ENCODE measurements at regions of chr2 and their contacts with region 1.

Region 1: DNA sequence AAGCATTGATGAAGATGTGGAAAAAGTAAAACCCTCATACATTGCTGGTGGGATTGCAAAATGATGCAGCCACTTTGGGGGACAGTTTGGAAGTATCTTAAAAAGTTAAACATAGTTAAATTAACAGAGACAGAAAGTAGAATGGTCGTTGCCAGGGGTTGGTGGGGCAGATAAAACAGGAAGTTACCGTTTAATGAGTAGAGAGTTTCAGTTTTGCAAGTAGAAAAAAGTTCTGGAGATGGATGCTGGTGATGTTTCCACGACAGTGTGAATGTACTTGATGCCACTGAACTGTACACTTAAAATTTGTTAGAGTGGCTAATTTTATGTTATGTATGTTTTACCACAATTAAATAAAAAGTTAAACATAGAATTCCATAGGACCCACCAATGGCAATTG is 44.5 kb upstream of the EGR4 start:
- DNase-seq: no peak
- ATAC-seq: no peak
- H3K4me3 ChIP-seq: no peak overlapping the region
- H3K27ac ChIP-seq: no peak overlapping the region
- H3K4me1 ChIP-seq: no peaks in the 10 kb centered on the region
- H3K27me3 ChIP-seq: peaks cover 12% of the 10 kb centered on the region; the same call in 1 of the 2 replicates
- CTCF ChIP-seq: no peak

Region 2: GRCh38 chr2:72638600-72639194 is 699.1 kb before region 1 on chr2:
- CTCF ChIA-PET with region 1: no interaction called
- POLR2A ChIA-PET with region 1: no interaction called
- in situ Hi-C with region 1: no loop called
- intact Hi-C with region 1: no loop called
- DNase-seq: no peak
- ATAC-seq: no peak
- H3K4me3 ChIP-seq: no peak overlapping the region
- H3K27ac ChIP-seq: no peak overlapping the region
- H3K4me1 ChIP-seq: no peaks in the 10 kb centered on the region
- H3K27me3 ChIP-seq: no peaks in the 10 kb centered on the region
- CTCF ChIP-seq: no peak

Region 3: DNA sequence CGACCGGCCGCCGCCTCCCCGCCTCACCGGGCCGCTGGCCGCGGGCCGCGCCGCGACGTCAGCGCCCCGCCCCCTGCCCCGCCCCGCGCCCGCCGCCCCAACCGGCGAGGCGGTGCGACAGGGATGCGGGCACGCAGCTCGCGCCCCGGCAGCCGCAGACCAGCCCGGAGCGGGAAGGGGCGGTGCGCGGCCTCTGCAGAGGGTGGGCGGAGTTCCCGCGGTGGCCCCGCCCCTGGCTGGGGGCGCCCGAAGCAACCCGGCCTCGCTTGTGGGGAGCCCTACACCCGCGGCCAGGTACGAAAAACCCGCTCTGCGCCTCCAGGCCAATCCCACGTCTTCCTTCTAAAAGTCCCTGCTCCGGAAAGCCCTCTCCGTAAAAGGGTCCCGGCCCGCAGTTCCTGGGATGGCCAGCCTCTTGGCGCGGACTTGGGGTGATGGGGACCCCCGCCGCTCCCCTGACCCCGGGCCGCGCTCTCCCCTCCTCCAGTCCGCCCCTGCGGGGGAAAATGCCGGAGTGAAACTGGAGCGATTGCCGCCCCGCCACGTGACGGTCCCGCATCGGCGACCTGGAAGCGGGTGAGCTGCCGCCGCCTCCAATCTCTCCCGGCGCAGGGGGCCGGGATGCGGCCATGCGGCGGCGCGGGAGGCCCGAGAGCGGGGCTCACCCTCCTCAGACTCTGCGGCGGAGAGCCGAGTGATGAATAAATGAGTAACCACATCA is 224.8 kb before region 1 on chr2 and contains the start of gene RAB11FIP5:
- CTCF ChIA-PET with region 1: no interaction called
- POLR2A ChIA-PET with region 1: interaction called, 10 read pairs
- in situ Hi-C with region 1: no loop called
- intact Hi-C with region 1: no loop called
- DNase-seq: no peak
- ATAC-seq: peak; percentile 93
- H3K4me3 ChIP-seq: peak within 1 kb of the TSS; percentile 71 to 80
- H3K27ac ChIP-seq: peak within 1 kb of the TSS; percentile 83
- H3K4me1 ChIP-seq: peaks cover 16% of the 10 kb centered on the region
- H3K27me3 ChIP-seq: no peaks in the 10 kb centered on the region
- CTCF ChIP-seq: no peak
- total RNA-seq, gene RAB11FIP5: 27.3 TPM

Region 4: GRCh38 chr2:73561422-73561821 is 223.6 kb after region 1 on chr2:
- CTCF ChIA-PET with region 1: no interaction called
- POLR2A ChIA-PET with region 1: interaction called, 12 read pairs
- in situ Hi-C with region 1: no loop called
- intact Hi-C with region 1: no loop called
- DNase-seq: no peak
- ATAC-seq: no peak
- H3K4me3 ChIP-seq: no peak overlapping the region
- H3K27ac ChIP-seq: no peak overlapping the region
- H3K4me1 ChIP-seq: no peaks in the 10 kb centered on the region
- H3K27me3 ChIP-seq: no peaks in the 10 kb centered on the region
- CTCF ChIP-seq: no peak

Measured in Panc1 (cell line).